Activated CD8-positive, alpha-beta memory T cell treated with anti-CD3 and anti-CD28 coated beads, Interleukin-2, amount 10 ng/mL, durations not matched to agents 7 days and 5 days (primary cell): ENCODE measurements at regions of chr12 and their contacts with region 1.

Region 1: DNA sequence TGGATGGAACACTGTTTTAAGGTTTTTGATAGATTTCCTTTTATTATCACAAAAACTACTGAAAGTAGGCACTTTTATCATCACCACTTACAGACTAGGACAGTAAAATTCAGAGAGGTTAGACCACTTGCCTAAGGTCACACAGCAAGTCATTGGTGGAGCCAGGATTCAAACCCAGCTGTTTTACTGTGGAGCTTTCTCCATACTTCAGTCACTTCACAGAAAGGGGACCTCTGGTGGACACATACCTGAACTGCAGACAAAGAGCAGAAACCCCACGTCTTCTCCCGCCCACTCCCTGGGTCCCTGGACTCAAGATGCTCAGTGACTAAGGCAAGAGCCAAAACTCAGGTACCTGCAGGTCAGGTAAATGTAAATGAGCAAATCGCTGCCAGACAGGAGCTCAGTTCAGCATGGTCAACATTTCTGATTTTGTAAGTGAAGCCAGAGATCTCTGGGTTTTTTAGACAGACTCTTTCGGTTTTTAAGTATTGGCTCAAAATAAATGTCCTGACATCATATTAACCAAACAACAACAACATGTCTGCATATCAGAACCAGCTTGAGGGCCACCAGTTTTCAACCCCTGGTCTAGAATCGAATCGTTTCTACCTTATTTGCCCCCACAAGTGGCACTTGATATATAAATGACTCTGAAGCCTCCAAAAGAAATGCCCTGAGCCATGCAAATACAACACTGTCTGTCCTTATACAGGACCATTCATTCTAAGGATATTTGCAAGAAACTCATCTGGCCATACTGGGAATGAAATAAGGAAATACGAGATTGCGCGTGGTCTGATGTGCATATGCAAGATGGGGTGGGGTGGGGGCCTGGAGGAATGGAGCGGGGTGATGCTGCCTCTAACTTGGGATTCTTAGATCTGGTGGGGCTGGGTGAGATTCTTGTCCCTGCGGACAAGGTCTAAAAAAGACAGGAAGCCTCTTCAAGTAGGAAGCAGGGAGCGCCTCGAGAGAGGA is 110.9 kb downstream of the KSR2 start:
- DNase-seq: peak; percentile 67
- ATAC-seq: no peak
- H3K4me3 Mint-ChIP-seq: no peak overlapping the region
- H3K27ac Mint-ChIP-seq: no peak overlapping the region
- H3K4me1 Mint-ChIP-seq: no peaks in the 10 kb centered on the region
- H3K27me3 Mint-ChIP-seq: no peaks in the 10 kb centered on the region

Region 2: DNA sequence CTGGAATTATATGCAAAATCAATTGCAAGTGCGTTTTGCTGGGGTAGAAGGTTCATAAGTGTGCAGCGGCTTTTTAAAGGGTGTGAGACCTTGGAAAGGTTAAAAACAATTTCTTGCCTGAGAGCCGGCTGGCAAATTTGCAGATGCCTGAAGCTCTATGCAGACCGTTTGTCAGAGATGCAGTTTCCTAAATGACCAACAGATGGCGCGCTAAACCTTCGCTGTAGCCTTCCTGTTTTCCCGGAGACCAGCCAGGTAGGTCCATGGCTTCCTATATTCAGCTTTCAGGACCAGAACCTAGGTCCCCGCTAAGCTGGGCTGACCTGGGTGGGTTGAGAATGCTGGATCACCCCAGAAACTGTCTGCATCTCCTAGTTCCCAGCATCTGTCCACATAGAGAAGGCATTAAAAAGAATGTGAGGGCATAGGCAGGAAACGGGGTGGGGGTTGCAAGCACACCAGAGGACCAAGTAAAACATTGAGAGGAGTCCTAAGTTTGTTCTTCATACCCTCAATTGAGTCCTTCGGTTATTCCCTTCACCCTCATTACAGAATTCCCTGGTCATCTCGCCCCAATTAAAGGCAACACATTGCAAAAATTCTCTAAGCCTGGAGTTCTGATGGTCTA is 490.8 kb before region 1 on chr12:
- CTCF ChIA-PET with region 1: interaction called, 13 read pairs
- DNase-seq: peak; percentile 66
- ATAC-seq: no peak
- H3K4me3 Mint-ChIP-seq: no peak overlapping the region
- H3K27ac Mint-ChIP-seq: no peak overlapping the region
- H3K4me1 Mint-ChIP-seq: no peaks in the 10 kb centered on the region
- H3K27me3 Mint-ChIP-seq: peaks cover 21% of the 10 kb centered on the region

Region 3: GRCh38 chr12:117830471-117830870 is 27.5 kb before region 1 on chr12:
- CTCF ChIA-PET with region 1: no interaction called
- DNase-seq: no peak
- ATAC-seq: no peak
- H3K4me3 Mint-ChIP-seq: no peak overlapping the region
- H3K27ac Mint-ChIP-seq: no peak overlapping the region
- H3K4me1 Mint-ChIP-seq: no peaks in the 10 kb centered on the region
- H3K27me3 Mint-ChIP-seq: no peaks in the 10 kb centered on the region

Region 4: GRCh38 chr12:117874842-117875434 is 17.0 kb after region 1 on chr12:
- CTCF ChIA-PET with region 1: interaction called, 21 read pairs
- DNase-seq: peak; percentile 74
- ATAC-seq: peak; percentile 67
- H3K4me3 Mint-ChIP-seq: no peak overlapping the region
- H3K27ac Mint-ChIP-seq: peak overlapping the region; percentile 54
- H3K4me1 Mint-ChIP-seq: peaks cover 5% of the 10 kb centered on the region
- H3K27me3 Mint-ChIP-seq: peaks cover 23% of the 10 kb centered on the region